ENCODE measurements at regions of chr2 and their contacts with region 1.

Region 1: DNA sequence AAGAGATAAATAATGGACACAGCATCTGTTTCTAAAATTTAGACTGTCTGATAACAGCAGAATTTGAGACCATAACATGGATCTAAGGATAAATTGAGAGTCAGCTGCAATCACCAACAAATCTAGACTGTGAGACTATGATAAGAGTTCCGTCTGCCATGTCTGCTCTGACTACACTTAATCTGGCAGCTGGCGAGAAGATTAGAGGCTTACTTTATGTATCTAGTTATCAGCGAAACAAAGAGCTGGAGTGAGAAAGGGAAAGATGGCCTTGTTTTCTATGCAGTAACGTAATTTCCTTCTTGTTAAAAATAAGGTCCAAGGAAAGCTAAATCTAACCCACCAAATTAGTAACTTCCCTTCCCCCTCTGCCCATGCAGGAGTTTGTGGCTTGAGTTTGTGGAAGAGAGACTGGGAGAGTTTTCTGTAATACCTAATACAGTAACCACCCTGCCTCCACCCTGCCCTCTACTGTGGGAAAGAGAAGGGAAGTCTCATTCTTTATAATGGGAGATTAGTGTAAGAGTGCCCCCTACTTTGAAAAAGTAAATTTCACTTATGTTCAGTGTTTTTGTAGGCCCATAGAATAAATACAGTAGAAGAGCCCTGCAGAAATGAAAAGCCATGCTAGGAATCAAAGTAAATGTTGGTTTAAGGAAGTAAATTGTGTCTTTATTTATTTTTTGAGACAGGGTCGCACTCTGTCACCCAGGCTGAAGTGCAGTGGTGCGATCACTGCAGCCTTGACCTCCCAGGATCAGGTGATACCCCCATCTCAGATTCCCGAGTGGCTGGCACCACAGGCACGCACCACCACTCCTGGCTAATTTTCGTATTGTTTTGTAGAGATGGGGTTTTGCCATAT is 27.5 kb downstream of the EML4 start:
- DNase-seq: peak; percentile 68
- H3K4me3 Mint-ChIP-seq: no peak overlapping the region
- H3K27ac Mint-ChIP-seq: peak overlapping the region; percentile 44
- H3K4me1 Mint-ChIP-seq: peaks cover 74% of the 10 kb centered on the region
- H3K27me3 Mint-ChIP-seq: no peaks in the 10 kb centered on the region

Region 2: GRCh38 chr2:41853427-41854216 is 343.0 kb before region 1 on chr2:
- CTCF ChIA-PET with region 1: no interaction called
- intact Hi-C with region 1: loop called (anchors 1 kb)
- DNase-seq: peak; percentile 27
- H3K4me3 Mint-ChIP-seq: no peak overlapping the region
- H3K27ac Mint-ChIP-seq: no peak overlapping the region
- H3K4me1 Mint-ChIP-seq: peaks cover 17% of the 10 kb centered on the region
- H3K27me3 Mint-ChIP-seq: peaks cover 16% of the 10 kb centered on the region

Region 3: DNA sequence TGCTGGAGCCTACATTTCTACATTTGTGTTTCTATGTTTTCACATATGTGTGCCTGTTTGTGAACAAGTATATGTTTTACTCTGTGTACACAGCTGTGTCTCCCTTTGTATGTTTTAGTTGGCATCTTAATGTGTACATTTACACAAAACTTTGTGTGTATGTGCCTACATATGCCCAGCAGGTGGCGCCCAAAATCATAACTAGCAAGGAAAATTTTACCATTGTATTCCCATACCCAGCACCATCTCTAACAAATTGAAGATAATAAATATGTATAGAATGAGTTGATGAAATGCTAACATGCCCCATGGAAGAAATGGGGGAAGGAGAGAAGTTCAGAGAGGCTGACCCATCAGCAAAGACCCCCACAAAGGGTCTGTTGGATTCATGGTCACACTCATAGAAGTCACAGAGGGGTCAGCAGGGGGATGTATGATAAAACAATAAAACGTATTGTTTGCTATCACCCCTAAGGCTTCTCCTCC is 100.7 kb before region 1 on chr2:
- CTCF ChIA-PET with region 1: interaction called, 75 read pairs
- intact Hi-C with region 1: loop called (anchors 1 kb)
- DNase-seq: peak; percentile 89
- H3K4me3 Mint-ChIP-seq: no peak overlapping the region
- H3K27ac Mint-ChIP-seq: no peak overlapping the region
- H3K4me1 Mint-ChIP-seq: peaks cover 24% of the 10 kb centered on the region
- H3K27me3 Mint-ChIP-seq: no peaks in the 10 kb centered on the region

Region 4: GRCh38 chr2:42132966-42133641 is 63.5 kb before region 1 on chr2:
- CTCF ChIA-PET with region 1: interaction called, 4 read pairs
- intact Hi-C with region 1: loop called (anchors 1 kb)
- DNase-seq: peak; percentile 91
- H3K4me3 Mint-ChIP-seq: peak overlapping the region; percentile 72
- H3K27ac Mint-ChIP-seq: peak overlapping the region; percentile 89
- H3K4me1 Mint-ChIP-seq: peaks cover 83% of the 10 kb centered on the region
- H3K27me3 Mint-ChIP-seq: no peaks in the 10 kb centered on the region

Region 5: DNA sequence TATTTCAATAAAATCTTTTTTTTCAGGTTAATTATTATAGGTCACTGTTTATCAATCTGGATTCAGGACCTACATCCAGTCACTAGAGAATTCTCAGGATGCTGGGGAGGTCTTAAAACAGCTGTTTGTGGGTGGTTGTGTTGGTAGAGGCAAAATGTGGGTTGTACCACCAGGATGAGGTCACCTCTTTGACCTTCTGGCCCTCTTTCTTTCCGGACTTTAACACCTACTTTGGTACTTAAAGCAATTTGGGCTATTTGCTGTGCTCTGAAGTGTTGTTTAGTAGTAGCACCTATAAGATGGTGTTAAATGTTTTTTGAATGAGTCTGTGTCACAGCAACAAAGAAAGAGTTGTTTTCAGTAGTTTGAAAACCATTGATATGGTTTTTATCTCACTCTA is 12.9 kb before region 1 on chr2:
- CTCF ChIA-PET with region 1: interaction called, 7 read pairs
- intact Hi-C with region 1: loop called (anchors 1 kb)
- DNase-seq: no peak
- H3K4me3 Mint-ChIP-seq: no peak overlapping the region
- H3K27ac Mint-ChIP-seq: no peak overlapping the region
- H3K4me1 Mint-ChIP-seq: peaks cover 68% of the 10 kb centered on the region
- H3K27me3 Mint-ChIP-seq: no peaks in the 10 kb centered on the region

Region 6: DNA sequence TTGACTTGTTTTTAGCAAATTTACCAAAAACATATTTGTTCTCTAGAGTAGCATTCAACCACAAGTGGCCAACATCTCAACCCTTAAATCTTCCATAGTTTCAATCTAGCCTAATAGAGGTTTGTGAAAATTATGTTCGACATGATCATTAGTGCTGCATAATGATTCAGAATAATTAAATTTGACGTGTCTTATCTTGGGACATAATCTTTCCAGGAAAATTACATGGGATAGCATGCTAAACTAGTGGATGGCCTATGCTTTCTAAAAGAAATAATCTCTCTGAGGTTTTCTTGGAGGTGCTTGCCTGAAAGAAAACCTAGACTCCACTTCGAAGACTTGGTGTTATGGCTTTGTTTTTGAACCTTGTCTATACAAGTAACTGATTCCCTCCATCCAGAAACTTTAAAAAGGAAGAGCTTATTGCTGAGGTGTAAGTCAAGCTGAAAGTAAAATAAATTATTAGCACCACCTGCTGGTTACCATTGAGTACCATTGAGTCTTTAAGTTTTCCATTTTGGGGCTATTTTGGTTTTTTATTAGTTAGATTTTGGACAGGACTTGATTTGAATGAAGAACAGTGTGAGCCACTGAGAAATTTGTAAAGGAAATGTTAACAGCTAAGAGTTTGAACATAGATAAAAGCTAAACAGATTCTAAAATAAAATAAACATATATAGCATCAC is 131.7 kb after region 1 on chr2:
- CTCF ChIA-PET with region 1: interaction called, 5 read pairs
- intact Hi-C with region 1: loop called (anchors 1 kb)
- DNase-seq: no peak
- H3K4me3 Mint-ChIP-seq: no peak overlapping the region
- H3K27ac Mint-ChIP-seq: peak overlapping the region; percentile 50
- H3K4me1 Mint-ChIP-seq: peaks cover 18% of the 10 kb centered on the region
- H3K27me3 Mint-ChIP-seq: no peaks in the 10 kb centered on the region

Region 7: GRCh38 chr2:42353792-42354429 is 157.3 kb after region 1 on chr2:
- CTCF ChIA-PET with region 1: no interaction called
- intact Hi-C with region 1: no loop called
- DNase-seq: no peak
- H3K4me3 Mint-ChIP-seq: no peak overlapping the region
- H3K27ac Mint-ChIP-seq: no peak overlapping the region
- H3K4me1 Mint-ChIP-seq: peaks cover 51% of the 10 kb centered on the region
- H3K27me3 Mint-ChIP-seq: no peaks in the 10 kb centered on the region